ENCODE measurements at regions of chr1 and their contacts with region 1.

Region 1: DNA sequence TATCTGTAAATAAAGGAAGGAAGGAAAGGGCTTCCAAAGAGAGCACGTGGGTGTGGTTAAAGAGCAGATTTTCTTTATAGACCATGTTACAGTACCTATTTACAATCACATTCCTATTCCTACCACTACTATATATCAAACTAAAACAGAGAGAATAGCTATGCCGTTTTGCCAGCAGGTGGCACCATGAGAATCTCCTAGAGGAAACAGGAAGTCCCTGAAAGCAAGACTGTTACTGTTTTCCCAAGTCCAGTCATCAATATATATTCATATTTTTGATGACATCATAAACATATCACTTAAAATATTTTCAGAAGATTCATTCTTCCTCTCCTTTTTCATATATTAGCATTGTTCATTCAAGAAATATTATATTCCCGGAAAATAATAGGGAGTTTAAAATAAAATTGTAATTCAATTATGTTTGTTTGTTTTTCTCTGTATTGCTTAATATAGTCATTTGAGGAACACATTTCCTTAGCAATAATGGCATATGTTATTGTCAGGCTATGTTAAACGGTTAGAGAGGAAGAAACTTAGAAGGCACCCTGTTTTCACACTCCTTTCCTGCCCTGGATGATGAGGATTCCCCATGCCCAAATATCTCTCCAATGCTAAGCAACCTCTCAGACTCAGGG is 6.6 kb downstream of the CCDC190 start:
- DNase-seq: peak in 1 of 2 donors; percentile 84
- H3K4me3 ChIP-seq: no peak overlapping the region
- H3K27ac ChIP-seq: peak overlapping the region; percentile 75 to 89
- H3K4me1 ChIP-seq: peaks cover 0 to 31% of the 10 kb centered on the region in 2 donors
- H3K27me3 ChIP-seq: no peaks in the 10 kb centered on the region
- CTCF ChIP-seq: peak; percentile 42 to 79 (median 68)

Region 2: DNA sequence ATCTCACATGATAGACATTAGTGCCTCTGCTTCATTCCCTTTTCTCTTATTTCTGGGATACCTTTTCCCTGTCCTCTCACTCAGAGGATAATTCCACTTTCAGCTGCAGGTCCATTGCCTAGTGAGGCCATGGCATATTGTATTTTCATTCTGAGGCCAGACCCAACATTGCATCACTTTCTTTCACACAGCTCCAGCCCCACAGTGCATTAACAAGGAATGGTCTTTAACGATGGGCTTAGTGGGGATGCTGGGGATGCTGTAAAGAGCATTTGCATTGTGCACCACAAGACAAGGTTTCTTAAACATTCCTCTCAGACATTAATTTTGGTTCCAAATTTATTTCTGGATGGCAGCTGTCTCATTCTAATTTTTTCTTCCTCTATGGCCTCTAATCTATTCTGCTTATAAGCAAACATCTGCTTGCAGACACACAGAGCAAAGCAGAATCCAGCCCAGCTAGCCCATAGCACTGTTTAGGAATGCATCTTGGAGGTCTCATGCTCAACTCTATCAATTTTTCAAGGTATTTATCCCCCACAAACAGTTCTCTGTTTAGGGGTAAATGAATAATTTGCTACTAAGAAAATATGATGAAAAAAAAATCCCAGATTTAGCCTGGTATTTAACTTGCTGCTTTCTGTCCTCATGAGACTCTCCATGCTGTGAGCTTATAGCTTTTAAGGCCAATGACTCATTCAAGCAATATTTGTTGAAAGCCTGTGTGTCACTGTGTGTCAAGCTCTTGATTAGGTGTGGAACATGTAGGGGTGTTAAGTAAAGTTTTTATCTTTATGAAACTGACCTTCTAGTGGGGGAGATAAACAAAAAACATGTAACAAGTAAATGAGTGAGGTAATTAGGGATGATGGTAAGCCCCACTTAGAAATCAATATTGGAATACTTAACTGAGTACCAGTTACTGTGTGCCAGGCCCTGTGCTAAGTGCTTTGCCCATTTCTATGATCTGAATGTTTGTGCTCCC is 51.1 kb after region 1 on chr1:
- intact Hi-C with region 1: loop called (anchors 5 kb)
- DNase-seq: no peak
- H3K4me3 ChIP-seq: no peak overlapping the region
- H3K27ac ChIP-seq: peak overlapping the region; percentile 31 to 38
- H3K4me1 ChIP-seq: peaks cover 0 to 11% of the 10 kb centered on the region in 2 donors
- H3K27me3 ChIP-seq: no peaks in the 10 kb centered on the region
- CTCF ChIP-seq: no peak

Region 3: DNA sequence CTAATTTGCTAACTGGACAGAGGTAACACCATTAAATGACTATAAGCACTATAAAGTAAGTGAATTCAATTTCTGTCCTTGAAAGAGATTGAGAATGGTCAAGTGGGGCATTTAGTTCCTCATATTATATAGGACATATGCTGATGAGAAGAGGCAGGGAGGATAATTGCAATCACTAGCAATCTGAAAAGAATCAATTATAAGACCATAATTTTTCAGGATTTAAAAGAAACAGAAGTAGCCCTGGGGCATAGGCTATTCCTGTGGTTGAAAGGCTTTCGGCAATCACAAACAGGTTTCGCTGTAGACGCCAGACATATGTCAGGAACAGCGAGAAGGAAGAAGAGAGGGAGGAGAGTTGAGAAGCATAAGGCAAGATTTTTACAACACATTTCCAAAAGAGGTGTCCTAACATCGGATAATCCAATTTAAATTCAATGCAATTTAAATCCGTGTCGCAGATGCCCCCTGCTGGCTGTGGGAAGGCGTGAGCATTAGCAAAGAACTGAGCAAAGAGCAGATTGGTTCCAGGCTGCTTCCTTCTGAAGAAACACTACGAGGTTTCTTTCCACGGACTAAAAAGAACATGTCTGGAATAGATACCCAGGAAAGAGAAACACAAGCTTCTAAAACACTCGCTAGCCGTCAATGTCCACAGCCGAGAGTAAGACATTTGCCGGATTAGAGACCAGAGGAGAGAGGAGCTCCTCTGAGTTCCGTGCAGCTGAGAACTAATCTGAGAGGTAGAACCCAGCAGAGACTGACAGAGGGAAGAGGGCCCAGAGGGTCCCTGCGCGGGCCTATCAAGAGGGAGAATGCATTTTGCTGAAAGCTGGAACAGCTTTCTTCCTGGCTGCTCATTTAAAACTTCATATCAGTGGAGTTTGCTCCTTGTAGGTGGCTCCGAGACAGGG is 320.4 kb after region 1 on chr1:
- intact Hi-C with region 1: loop called (anchors 2 kb)
- DNase-seq: peak in 1 of 2 donors; percentile 82
- H3K4me3 ChIP-seq: peak overlapping the region; percentile 44 to 56
- H3K27ac ChIP-seq: peak overlapping the region; percentile 82 to 85
- H3K4me1 ChIP-seq: peaks cover 0 to 52% of the 10 kb centered on the region in 2 donors
- H3K27me3 ChIP-seq: no peaks in the 10 kb centered on the region
- CTCF ChIP-seq: peak; percentile 84 to 86 (median 84)